IMR-90 (cell line): ENCODE measurements at regions of chr2 and their contacts with region 1.

Region 1: DNA sequence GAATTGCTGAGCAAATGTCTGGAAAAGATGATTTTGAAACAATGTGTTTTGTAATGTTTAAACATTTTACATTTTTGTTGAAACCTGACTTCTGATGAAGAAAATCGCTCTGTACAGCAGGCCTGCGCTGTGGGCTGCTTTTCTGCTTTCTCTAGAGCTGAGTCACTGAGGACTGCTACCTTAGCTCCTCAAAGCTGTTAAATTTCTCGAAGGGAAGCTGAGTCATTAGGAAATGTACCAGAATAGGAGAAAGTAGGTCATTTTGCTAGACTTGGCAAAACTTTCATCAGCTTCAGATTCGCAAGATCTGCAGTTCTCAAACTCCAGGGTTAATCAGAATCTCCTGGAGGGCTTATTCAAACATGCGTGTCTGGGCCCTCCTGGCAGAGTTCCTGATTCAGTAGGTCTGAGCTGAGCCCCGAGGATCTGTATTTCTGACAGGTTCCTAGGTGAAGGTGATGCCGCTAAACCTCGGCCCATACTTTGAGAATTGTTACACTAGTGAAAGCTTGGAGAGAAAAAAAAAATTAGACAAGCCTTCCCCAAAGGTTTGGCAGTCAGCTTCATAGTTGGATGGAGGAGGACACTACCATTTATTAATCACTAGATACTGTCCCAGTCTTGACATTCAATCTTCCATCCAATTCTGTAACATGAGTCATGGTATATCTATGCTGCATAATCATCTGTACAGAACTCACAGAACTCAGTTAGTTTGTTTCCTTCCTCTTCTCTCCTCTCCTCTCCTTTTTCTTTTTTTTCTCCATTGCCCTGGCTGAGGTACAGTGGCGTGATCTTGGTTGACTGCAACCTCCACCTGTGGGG is 297.6 kb downstream of the PARD3B start:
- DNase-seq: peak; percentile 96
- ATAC-seq: peak; percentile 99
- H3K4me3 ChIP-seq: no peak overlapping the region
- H3K27ac ChIP-seq: peak overlapping the region; percentile 76; the same call in 1 of the 2 replicates
- H3K4me1 ChIP-seq: peaks cover 5% of the 10 kb centered on the region
- H3K27me3 ChIP-seq: no peaks in the 10 kb centered on the region
- CTCF ChIP-seq: no peak
- POLR2A ChIP-seq: no peak
- RAD21 ChIP-seq: no peak

Region 2: GRCh38 chr2:204705243-204705932 is 137.5 kb before region 1 on chr2:
- CTCF ChIA-PET with region 1: no interaction called
- POLR2A ChIA-PET with region 1: no interaction called
- dilution Hi-C with region 1: no loop called
- in situ Hi-C with region 1: no loop called
- intact Hi-C with region 1: loop called (anchors 10 kb)
- DNase-seq: peak; percentile 64
- ATAC-seq: no peak
- H3K4me3 ChIP-seq: no peak overlapping the region
- H3K27ac ChIP-seq: no peak overlapping the region
- H3K4me1 ChIP-seq: no peaks in the 10 kb centered on the region; the same call in 1 of the 2 replicates
- H3K27me3 ChIP-seq: no peaks in the 10 kb centered on the region
- CTCF ChIP-seq: no peak
- POLR2A ChIP-seq: no peak
- RAD21 ChIP-seq: no peak

Region 3: GRCh38 chr2:205024822-205025518 is 182.1 kb after region 1 on chr2:
- CTCF ChIA-PET with region 1: no interaction called
- POLR2A ChIA-PET with region 1: interaction called, 14 read pairs
- dilution Hi-C with region 1: no loop called
- in situ Hi-C with region 1: no loop called
- intact Hi-C with region 1: no loop called
- DNase-seq: peak; percentile 98
- ATAC-seq: peak; percentile 95
- H3K4me3 ChIP-seq: peak overlapping the region; percentile 33; the same call in 1 of the 2 replicates
- H3K27ac ChIP-seq: peak overlapping the region; percentile 5; the same call in 1 of the 2 replicates
- H3K4me1 ChIP-seq: peaks cover 4% of the 10 kb centered on the region
- H3K27me3 ChIP-seq: no peaks in the 10 kb centered on the region
- CTCF ChIP-seq: no peak
- POLR2A ChIP-seq: no peak
- RAD21 ChIP-seq: peak; percentile 23; the same call in 1 of the 2 replicates